ENCODE measurements at regions of chr3 and their contacts with region 1.

Region 1: GRCh38 chr3:73056014-73056844 is 5.2 kb upstream of the EBLN2 start:
- DNase-seq: peak in 2 of 5 donors; percentile 15 to 25
- H3K4me3 ChIP-seq: no peak overlapping the region
- H3K4me3 Mint-ChIP-seq: no peak overlapping the region
- H3K27ac ChIP-seq: no peak overlapping the region
- H3K27ac Mint-ChIP-seq: peak overlapping the region in 5 of 8 donors; percentile 6 to 83 (median 24)
- H3K4me1 ChIP-seq: peaks cover 3% of the 10 kb centered on the region
- H3K4me1 Mint-ChIP-seq: peaks cover 17 to 45% (median 44%) of the 10 kb centered on the region in 3 donors
- H3K27me3 ChIP-seq: no peaks in the 10 kb centered on the region
- H3K27me3 Mint-ChIP-seq: no peaks in the 10 kb centered on the region

Region 2: DNA sequence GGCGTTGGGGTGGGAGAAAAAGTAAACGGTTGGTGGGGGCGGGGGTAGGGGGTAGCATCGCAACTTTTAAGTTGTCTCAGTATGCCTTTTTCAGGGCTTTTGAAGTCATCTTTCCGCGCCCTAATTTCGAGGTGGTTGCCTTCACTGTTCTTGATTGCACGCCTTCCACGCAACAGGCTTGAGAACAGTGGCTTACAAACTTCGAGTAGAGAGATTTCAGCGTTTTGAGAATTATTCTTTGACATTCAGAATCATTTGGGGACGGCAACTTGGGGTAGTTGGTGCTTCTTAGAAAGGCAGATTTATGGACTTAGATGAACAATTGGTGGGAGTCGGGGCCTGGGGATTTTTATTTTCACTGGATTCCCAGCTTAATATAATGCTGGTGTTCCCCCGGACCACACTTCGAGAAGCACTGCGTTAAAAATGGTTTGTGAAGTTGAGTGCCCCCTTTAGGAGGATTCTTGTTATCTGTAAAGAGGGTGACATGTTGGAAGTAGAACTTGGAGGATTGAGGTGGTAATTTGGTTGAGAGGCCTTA is 58.7 kb before region 1 on chr3:
- CTCF ChIA-PET with region 1: interaction called, 12 read pairs
- POLR2A ChIA-PET with region 1: no interaction called
- DNase-seq: peak in 4 of 5 donors; percentile 16 to 53 (median 46)
- H3K4me3 ChIP-seq: peak overlapping the region; percentile 59
- H3K4me3 Mint-ChIP-seq: peak overlapping the region; percentile 83 to 94 (median 90)
- H3K27ac ChIP-seq: peak overlapping the region; percentile 55
- H3K27ac Mint-ChIP-seq: peak overlapping the region; percentile 80 to 98 (median 92)
- H3K4me1 ChIP-seq: peaks cover 49% of the 10 kb centered on the region
- H3K4me1 Mint-ChIP-seq: peaks cover 46 to 59% (median 51%) of the 10 kb centered on the region in 3 donors
- H3K27me3 ChIP-seq: no peaks in the 10 kb centered on the region
- H3K27me3 Mint-ChIP-seq: no peaks in the 10 kb centered on the region

Region 3: DNA sequence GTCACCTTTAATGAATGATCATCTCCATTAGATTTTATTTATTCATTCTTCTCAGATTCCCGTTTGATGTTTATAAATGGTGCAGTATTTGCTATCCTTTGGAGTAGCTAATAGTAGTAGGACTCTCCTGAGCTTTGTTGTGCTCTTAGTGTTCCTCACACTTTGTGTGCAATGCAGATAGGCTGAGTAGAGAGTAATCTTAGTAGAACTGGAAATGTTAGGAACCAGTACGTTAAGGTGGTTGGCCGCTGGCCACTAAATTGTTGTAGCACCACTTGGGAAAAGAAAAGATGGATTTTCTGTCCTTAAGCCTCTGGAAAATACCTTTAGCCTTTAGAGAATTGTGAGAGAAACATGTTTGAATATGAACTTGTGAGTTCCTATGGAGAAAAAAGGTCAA is 14.7 kb before region 1 on chr3:
- CTCF ChIA-PET with region 1: no interaction called
- POLR2A ChIA-PET with region 1: no interaction called
- DNase-seq: no peak
- H3K4me3 ChIP-seq: no peak overlapping the region
- H3K4me3 Mint-ChIP-seq: peak overlapping the region in 2 of 7 donors; percentile 1 to 3
- H3K27ac ChIP-seq: no peak overlapping the region
- H3K27ac Mint-ChIP-seq: peak overlapping the region in 4 of 8 donors; percentile 17 to 73 (median 52)
- H3K4me1 ChIP-seq: peaks cover 28% of the 10 kb centered on the region
- H3K4me1 Mint-ChIP-seq: peaks cover 73 to 96% (median 86%) of the 10 kb centered on the region in 3 donors
- H3K27me3 ChIP-seq: no peaks in the 10 kb centered on the region
- H3K27me3 Mint-ChIP-seq: no peaks in the 10 kb centered on the region

Measured in CD8-positive, alpha-beta memory T cell (primary cell).